ENCODE measurements at regions of chr18 and their contacts with region 1.

Region 1: GRCh38 chr18:48902023-48902855 is 48.5 kb downstream of the SMAD7 start:
- DNase-seq: peak; percentile 96
- H3K4me3 ChIP-seq: no peak overlapping the region
- H3K27ac ChIP-seq: peak overlapping the region; percentile 99
- H3K4me1 ChIP-seq: peaks cover 26% of the 10 kb centered on the region
- H3K27me3 ChIP-seq: no peaks in the 10 kb centered on the region
- CTCF ChIP-seq: peak; percentile 9 to 22
- POLR2A ChIP-seq: peak; percentile 53

Region 2: GRCh38 chr18:48711651-48712486 is 190.4 kb before region 1 on chr18:
- CTCF ChIA-PET with region 1: interaction called, 3 read pairs
- POLR2A ChIA-PET with region 1: no interaction called
- dilution Hi-C with region 1: no loop called
- intact Hi-C with region 1: loop called (anchors 2 kb)
- DNase-seq: peak; percentile 51
- H3K4me3 ChIP-seq: no peak overlapping the region
- H3K27ac ChIP-seq: no peak overlapping the region
- H3K4me1 ChIP-seq: peaks cover 35% of the 10 kb centered on the region
- H3K27me3 ChIP-seq: no peaks in the 10 kb centered on the region
- CTCF ChIP-seq: peak; percentile 45 to 56
- POLR2A ChIP-seq: no peak

Region 3: DNA sequence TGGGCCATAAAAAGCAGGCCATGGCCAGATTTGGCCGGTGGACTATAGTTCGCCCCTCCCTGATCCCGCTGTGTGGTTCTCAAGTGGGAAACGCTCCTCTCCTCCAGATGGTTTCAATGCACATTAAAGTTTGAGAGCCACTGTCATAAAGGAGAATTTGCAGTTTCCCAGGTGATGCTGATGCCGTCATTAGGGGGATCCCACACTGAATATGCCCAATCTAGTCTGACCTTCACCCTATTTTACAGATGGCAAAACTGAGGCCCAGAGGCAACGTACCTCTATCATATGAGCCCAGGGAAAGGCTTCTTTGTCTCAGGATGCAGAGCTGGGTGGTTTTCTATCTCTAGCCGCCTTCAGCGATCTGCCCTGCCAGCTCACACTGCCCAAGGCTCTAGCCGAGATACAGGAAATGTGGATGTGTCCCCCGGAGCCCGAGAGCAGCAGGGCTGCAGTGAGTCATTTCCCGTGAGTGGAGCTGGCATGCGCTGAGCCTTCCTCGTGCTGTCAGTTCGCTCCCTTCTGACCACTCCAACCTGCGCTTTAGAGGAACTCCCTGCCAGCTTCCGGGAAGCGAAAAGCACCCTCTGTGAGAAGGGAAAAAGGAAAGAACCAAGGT is 67.7 kb before region 1 on chr18:
- CTCF ChIA-PET with region 1: interaction called, 5 read pairs
- POLR2A ChIA-PET with region 1: no interaction called
- dilution Hi-C with region 1: no loop called
- intact Hi-C with region 1: loop called (anchors 2 kb)
- DNase-seq: peak; percentile 90
- H3K4me3 ChIP-seq: no peak overlapping the region
- H3K27ac ChIP-seq: peak overlapping the region; percentile 30
- H3K4me1 ChIP-seq: peaks cover 36% of the 10 kb centered on the region
- H3K27me3 ChIP-seq: no peaks in the 10 kb centered on the region
- CTCF ChIP-seq: no peak
- POLR2A ChIP-seq: no peak

Region 4: GRCh38 chr18:48842259-48843061 is 59.8 kb before region 1 on chr18:
- CTCF ChIA-PET with region 1: interaction called, 4 read pairs
- POLR2A ChIA-PET with region 1: no interaction called
- dilution Hi-C with region 1: no loop called
- intact Hi-C with region 1: loop called (anchors 1 kb)
- DNase-seq: peak; percentile 95
- H3K4me3 ChIP-seq: no peak overlapping the region
- H3K27ac ChIP-seq: peak overlapping the region; percentile 74
- H3K4me1 ChIP-seq: peaks cover 60% of the 10 kb centered on the region
- H3K27me3 ChIP-seq: no peaks in the 10 kb centered on the region
- CTCF ChIP-seq: no peak
- POLR2A ChIP-seq: no peak

Region 5: GRCh38 chr18:48946329-48946835 is 44.1 kb after region 1 on chr18:
- CTCF ChIA-PET with region 1: interaction called, 7 read pairs
- POLR2A ChIA-PET with region 1: no interaction called
- dilution Hi-C with region 1: no loop called
- intact Hi-C with region 1: loop called (anchors 2 kb)
- DNase-seq: peak; percentile 71
- H3K4me3 ChIP-seq: no peak overlapping the region
- H3K27ac ChIP-seq: no peak overlapping the region
- H3K4me1 ChIP-seq: peaks cover 68% of the 10 kb centered on the region
- H3K27me3 ChIP-seq: no peaks in the 10 kb centered on the region
- CTCF ChIP-seq: no peak
- POLR2A ChIP-seq: peak; percentile 46

Region 6: DNA sequence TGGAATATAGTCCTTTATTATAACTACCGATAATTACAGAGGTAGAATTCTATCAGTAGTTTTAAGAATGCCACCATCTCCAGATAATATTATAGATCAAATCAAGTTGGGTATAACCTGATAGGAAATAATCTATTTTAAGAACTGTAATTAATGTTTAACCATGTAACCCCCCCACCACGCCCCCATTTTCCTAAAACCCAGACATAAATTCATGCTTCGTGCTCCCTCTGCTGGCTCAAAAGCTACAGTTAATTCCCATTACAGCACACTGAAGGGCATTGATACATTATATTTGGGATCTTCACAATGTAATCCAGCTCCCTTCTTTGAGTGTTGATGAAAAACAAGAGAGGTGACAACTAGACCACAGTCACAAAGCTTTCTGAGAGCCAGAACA is 276.5 kb after region 1 on chr18:
- CTCF ChIA-PET with region 1: no interaction called
- POLR2A ChIA-PET with region 1: no interaction called
- dilution Hi-C with region 1: no loop called
- intact Hi-C with region 1: loop called (anchors 5 kb)
- DNase-seq: peak; percentile 37
- H3K4me3 ChIP-seq: no peak overlapping the region
- H3K27ac ChIP-seq: no peak overlapping the region
- H3K4me1 ChIP-seq: peaks cover 18% of the 10 kb centered on the region
- H3K27me3 ChIP-seq: no peaks in the 10 kb centered on the region
- CTCF ChIP-seq: peak; percentile 44 to 48
- POLR2A ChIP-seq: no peak